Kidney (tissue), 22 donors: ENCODE measurements at regions of chr7 and their contacts with region 1.

Region 1: GRCh38 chr7:85023045-85023712 is 163.7 kb downstream of the SEMA3D start:
- DNase-seq: peak in 2 of 5 donors; percentile 67 to 81
- H3K4me3 ChIP-seq: no peak overlapping the region
- H3K27ac ChIP-seq: no peak overlapping the region
- H3K4me1 ChIP-seq: no peaks in the 10 kb centered on the region
- H3K27me3 ChIP-seq: no peaks in the 10 kb centered on the region
- CTCF ChIP-seq: peak; percentile 55

Region 2: GRCh38 chr7:83976295-83976694 is 1046.9 kb before region 1 on chr7:
- intact Hi-C with region 1: loop called (anchors 10 kb)
- DNase-seq: peak in 2 of 5 donors; percentile 48 to 59
- H3K4me3 ChIP-seq: no peak overlapping the region
- H3K27ac ChIP-seq: no peak overlapping the region
- H3K4me1 ChIP-seq: no peaks in the 10 kb centered on the region
- H3K27me3 ChIP-seq: no peaks in the 10 kb centered on the region
- CTCF ChIP-seq: peak; percentile 37